ENCODE measurements at regions of chr5 and their contacts with region 1.

Region 1: DNA sequence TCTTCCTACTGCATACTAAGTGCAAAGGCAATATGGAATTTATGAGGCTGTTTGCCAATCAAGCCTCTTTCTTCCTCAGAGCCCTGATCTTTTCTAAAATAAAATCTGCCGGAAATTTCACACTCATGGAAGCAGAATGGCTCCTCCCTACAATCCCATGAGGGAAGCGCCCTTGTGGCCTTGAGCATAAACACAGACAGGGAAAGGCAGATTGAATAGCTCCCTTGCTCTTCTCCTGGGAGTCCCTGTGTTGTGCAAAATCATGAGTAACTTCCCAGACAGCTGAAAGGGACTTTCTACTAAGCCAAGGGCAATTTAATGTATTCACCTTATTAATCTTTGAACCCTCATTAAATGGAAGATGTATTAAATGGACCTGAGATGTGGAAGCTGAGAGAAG is 226.1 kb upstream of the PIK3R1 start:
- DNase-seq: peak; percentile 41
- H3K4me3 Mint-ChIP-seq: no peak overlapping the region
- H3K27ac Mint-ChIP-seq: no peak overlapping the region
- H3K4me1 Mint-ChIP-seq: peaks cover 17% of the 10 kb centered on the region
- H3K27me3 Mint-ChIP-seq: no peaks in the 10 kb centered on the region
- CTCF ChIP-seq: no peak

Region 2: DNA sequence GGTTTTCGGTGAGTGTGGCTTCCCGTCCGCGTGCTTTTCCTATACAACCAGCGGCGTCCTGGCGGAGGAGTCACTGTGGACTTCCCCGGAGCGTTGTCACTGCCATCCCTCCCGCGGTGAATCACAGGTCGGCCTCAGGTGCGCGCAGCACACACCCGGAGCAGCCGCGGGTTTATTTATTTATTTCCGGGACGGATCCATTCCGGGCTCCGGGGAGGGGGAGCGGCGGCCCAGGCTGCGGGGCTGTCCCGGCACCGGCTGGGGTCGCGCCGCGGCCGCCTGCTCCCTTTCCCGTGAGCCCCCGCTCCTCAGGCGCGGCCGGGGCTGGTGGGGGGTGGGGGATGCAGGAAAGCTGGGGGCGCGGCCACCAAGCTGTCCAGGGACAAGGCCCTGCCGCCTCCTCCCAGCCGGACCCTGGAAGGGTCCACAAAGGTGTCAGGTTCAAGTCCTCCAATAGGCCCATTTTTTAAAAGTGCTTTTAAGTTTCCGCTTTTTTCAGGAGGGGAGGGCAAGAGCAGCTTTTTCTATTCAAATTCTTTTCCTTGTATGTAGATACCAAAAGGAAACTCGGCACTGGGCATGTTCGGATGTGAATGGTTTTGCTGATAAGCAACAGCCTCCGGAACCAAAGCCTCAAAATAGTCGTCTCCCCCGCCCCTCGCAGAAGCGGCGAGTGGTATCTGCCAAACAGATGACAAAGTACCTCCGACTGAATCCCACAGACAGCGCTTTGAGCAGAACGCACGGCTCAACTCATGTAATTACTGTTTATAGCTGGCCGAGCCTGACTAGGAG is 985.3 kb before region 1 on chr5:
- CTCF ChIA-PET with region 1: no interaction called
- POLR2A ChIA-PET with region 1: no interaction called
- intact Hi-C with region 1: no loop called
- DNase-seq: peak; percentile 93
- H3K4me3 Mint-ChIP-seq: peak overlapping the region; percentile 96
- H3K27ac Mint-ChIP-seq: peak overlapping the region; percentile 97
- H3K4me1 Mint-ChIP-seq: peaks cover 36% of the 10 kb centered on the region
- H3K27me3 Mint-ChIP-seq: no peaks in the 10 kb centered on the region
- CTCF ChIP-seq: no peak

Region 3: DNA sequence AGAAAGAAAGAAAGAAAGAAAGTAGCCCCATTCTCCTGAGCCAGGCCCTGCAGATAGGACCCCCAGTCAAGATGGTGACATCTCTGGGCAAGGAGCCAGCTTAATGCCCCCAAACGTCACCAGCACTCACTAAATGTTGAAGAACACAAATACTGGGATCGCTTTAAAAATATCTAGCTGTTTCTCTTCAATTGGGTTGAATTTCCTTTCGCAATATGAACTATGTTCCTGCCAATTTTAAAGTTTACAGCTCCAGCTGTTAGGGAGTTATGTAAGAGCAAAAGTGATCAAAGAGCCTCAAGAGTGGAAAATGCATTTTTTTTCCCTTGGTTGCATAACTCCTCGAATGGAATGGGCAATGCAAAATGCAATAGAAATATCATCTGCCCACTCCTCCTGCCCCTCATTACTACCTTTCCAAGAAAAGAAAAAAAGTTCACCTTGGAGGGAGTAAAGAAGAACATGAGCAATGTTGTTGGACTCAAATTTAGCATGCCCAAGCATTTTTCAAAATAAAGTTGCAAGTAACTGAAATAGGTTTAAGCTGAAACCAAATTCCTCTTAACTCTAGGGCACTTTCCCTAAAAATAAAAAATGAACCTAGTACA is 18.1 kb before region 1 on chr5:
- CTCF ChIA-PET with region 1: interaction called, 3 read pairs
- POLR2A ChIA-PET with region 1: interaction called, 11 read pairs
- intact Hi-C with region 1: no loop called
- DNase-seq: peak; percentile 87
- H3K4me3 Mint-ChIP-seq: no peak overlapping the region
- H3K27ac Mint-ChIP-seq: no peak overlapping the region
- H3K4me1 Mint-ChIP-seq: peaks cover 29% of the 10 kb centered on the region
- H3K27me3 Mint-ChIP-seq: no peaks in the 10 kb centered on the region
- CTCF ChIP-seq: no peak

Measured in MCF 10A (cell line).